ENCODE measurements at regions of chr14 and their contacts with region 1.

Region 1: GRCh38 chr14:91911474-91912032 is 35.9 kb downstream of the FBLN5 start:
- DNase-seq: peak in 1 of 10 donors; percentile 27
- H3K4me3 ChIP-seq: no peak overlapping the region
- H3K27ac ChIP-seq: no peak overlapping the region
- H3K27me3 ChIP-seq: no peaks in the 10 kb centered on the region
- CTCF ChIP-seq: peak; percentile 25 to 82 (median 60)

Region 2: DNA sequence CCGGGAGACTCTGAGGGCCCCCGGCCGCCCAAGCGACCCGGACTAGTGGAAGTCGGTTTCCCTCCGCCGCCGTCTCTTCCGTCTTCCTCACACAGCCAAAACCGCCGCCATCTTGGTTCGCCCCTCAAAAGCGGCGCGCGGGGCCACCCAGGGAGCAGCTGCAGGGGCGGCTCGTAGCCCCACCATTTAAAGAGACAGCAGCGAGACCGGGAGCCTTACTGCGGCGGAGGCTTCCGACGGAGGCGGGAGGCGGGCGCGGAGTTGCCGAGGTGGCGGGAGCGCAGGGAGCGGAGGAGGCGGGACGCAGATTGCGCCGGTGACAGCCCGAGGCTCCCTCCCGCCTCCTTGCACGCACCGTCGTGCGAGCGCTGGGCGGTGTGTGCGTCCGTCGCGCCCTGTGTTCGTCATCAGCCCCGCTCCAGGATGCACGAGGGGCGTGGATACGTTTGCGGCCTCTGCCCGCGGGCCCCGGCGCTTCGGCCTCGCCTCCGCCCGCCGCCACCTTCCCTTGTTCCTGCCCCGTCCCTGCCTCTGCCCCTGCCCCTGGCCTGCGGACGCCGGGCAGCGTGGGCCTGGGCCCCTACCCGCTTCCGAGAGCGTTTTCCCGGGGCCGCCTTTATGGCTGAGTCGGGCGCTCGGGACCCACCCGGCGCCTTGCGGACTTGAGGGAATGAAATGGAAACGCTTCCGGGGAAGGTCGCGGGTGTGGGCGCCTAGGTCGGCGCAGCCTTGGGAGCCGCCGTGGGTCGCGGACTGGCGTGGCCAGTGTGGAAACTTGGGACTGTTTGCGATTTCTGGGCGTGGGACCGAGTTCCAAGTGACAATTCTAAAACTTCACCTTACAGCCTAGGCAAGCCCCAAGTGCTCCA is 401.1 kb before region 1 on chr14 and contains the start of gene PPP4R3A:
- intact Hi-C with region 1: loop called in 1 of 2 experiments (anchors 10 kb)
- DNase-seq: peak; percentile 84 to 96 (median 93)
- H3K4me3 ChIP-seq: peak within 1 kb of the TSS; percentile 71 to 99 (median 91)
- H3K27ac ChIP-seq: peak within 1 kb of the TSS; percentile 92 to 100 (median 99)
- H3K27me3 ChIP-seq: no peaks in the 10 kb centered on the region
- CTCF ChIP-seq: peak in 25 of 56 donors; percentile 2 to 45 (median 17)
- total RNA-seq, gene PPP4R3A: 47.0 to 113 (median 64.2) TPM

Region 3: GRCh38 chr14:91649930-91650329 is 261.6 kb before region 1 on chr14:
- intact Hi-C with region 1: loop called (anchors 5 kb)
- DNase-seq: no peak
- H3K4me3 ChIP-seq: no peak overlapping the region
- H3K27ac ChIP-seq: no peak overlapping the region
- H3K27me3 ChIP-seq: peaks cover 0 to 4% (median 0%) of the 10 kb centered on the region in 45 donors
- CTCF ChIP-seq: peak; percentile 25 to 91 (median 70)

Region 4: DNA sequence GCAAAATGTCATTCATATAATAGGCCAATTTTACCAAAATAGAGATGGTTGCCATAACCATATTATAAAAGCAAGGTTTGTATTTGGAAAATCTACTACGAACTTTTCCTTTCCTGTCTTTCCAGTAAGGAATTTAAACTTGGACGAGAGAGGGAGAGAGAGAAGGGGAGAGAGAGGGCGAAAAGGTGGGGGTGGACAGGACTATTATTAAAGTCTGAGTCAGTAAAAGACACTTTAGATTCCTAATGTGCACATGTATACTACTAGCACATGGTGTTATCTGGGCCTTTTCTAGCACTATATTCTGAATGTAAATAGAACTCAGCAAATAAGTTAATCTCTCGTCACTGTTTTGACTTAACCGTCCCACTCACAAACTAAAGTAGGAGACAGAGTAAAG is 66.3 kb after region 1 on chr14:
- intact Hi-C with region 1: no loop called
- DNase-seq: no peak
- H3K4me3 ChIP-seq: no peak overlapping the region
- H3K27ac ChIP-seq: no peak overlapping the region
- H3K27me3 ChIP-seq: no peaks in the 10 kb centered on the region
- CTCF ChIP-seq: no peak

Measured in dorsolateral prefrontal cortex (tissue), 120 donors.